CD4-positive, alpha-beta memory T cell (primary cell): ENCODE measurements at regions of chr17 and their contacts with region 1.

Region 1: DNA sequence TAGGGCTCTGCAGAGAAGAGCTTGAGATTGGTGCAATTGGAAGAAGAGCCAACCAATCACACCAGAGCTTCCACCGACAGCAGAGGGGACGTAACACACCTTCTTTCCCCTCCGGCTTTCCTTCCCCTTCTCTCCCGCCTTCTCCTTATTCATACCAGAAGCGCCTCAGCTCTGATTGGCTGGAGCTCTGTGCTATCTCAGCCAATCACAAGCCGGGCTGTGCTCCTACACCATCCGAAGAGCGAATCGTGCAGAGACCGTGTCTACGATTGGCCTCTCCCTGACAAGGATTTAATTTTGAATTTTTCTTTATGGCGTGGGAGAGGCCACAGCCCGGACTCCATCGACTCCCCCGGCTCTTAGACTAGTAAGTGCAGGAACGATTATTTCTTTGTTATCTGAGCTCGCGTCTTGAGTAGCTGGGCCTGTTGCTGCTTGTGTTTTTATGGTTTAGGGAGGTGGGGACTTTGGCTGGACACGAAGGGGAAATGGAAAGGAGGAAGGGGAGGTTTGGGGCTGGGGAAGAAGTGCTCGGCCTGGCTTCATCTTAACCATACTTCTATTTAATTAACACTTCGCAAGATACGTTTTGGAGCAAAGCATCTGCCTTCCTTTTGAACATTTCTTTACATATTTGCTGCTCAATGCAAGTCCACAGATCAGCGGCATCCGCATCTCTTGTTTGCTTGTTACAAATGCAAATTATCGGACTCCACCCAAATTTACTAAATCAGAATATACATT is at the start of gene PRR11:
- DNase-seq: peak in 3 of 5 donors; percentile 98 to 99 (median 99)
- H3K4me3 ChIP-seq: peak within 1 kb of the TSS; percentile 93 to 98
- H3K4me3 Mint-ChIP-seq: no peak within 1 kb of the TSS
- H3K27ac ChIP-seq: peak within 1 kb of the TSS; percentile 65
- H3K27ac Mint-ChIP-seq: no peak within 1 kb of the TSS
- H3K4me1 ChIP-seq: peaks cover 60% of the 10 kb centered on the region
- H3K4me1 Mint-ChIP-seq: peaks cover 25 to 53% (median 39%) of the 10 kb centered on the region in 4 donors
- H3K27me3 ChIP-seq: no peaks in the 10 kb centered on the region
- H3K27me3 Mint-ChIP-seq: no peaks in the 10 kb centered on the region
- total RNA-seq, gene PRR11: 0.93 to 2.1 TPM

Region 2: DNA sequence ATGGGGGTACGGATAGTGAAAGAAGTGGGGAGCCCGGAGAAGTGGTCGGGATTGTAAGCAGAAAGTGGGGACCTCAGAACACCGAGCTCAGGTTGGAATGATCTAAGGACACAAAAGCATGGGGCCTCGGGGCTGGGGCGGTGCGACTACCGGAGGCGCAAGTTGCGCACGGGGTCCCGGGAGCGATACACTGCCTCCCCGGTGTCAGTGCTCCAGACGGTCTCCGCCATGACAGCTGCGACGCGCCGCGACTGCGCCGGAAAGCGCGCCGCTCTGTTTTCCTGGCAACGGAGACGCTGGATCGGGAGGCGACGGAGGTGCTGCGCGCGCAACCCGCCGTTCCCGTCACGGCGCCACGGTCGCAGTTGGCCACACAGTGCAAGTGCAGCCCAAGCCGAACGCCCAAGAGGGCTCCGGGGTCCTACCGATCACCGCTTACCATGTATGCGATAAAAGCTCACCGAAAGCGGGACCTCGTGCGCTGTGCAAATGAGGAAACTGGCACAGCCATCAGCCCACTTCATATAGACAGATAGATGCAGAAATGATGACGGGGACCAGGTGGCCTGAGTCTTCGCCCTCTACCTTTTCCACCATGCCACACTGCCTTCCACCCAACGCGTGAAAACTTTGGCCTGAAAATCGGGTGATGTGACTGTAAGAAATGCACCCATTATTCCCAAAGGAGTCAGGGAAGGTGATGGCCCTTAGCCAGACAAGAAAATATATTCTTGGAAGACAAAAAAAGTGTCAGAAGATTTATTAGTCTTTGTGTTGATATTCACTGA is 936.4 kb before region 1 on chr17 and contains the start of gene MKS1:
- CTCF ChIA-PET with region 1: no interaction called
- POLR2A ChIA-PET with region 1: no interaction called
- intact Hi-C with region 1: loop called (anchors 2 kb)
- DNase-seq: peak; percentile 94 to 96 (median 95)
- H3K4me3 ChIP-seq: peak within 1 kb of the TSS; percentile 71 to 88
- H3K4me3 Mint-ChIP-seq: peak within 1 kb of the TSS; percentile 91 to 99 (median 94)
- H3K27ac ChIP-seq: peak within 1 kb of the TSS; percentile 54
- H3K27ac Mint-ChIP-seq: peak within 1 kb of the TSS; percentile 94 to 99 (median 97)
- H3K4me1 ChIP-seq: peaks cover 15% of the 10 kb centered on the region
- H3K4me1 Mint-ChIP-seq: peaks cover 19 to 28% (median 23%) of the 10 kb centered on the region in 4 donors
- H3K27me3 ChIP-seq: no peaks in the 10 kb centered on the region
- H3K27me3 Mint-ChIP-seq: peaks cover 0 to 2% of the 10 kb centered on the region in 2 donors
- total RNA-seq, gene MKS1: 27.7 to 29.4 TPM

Region 3: DNA sequence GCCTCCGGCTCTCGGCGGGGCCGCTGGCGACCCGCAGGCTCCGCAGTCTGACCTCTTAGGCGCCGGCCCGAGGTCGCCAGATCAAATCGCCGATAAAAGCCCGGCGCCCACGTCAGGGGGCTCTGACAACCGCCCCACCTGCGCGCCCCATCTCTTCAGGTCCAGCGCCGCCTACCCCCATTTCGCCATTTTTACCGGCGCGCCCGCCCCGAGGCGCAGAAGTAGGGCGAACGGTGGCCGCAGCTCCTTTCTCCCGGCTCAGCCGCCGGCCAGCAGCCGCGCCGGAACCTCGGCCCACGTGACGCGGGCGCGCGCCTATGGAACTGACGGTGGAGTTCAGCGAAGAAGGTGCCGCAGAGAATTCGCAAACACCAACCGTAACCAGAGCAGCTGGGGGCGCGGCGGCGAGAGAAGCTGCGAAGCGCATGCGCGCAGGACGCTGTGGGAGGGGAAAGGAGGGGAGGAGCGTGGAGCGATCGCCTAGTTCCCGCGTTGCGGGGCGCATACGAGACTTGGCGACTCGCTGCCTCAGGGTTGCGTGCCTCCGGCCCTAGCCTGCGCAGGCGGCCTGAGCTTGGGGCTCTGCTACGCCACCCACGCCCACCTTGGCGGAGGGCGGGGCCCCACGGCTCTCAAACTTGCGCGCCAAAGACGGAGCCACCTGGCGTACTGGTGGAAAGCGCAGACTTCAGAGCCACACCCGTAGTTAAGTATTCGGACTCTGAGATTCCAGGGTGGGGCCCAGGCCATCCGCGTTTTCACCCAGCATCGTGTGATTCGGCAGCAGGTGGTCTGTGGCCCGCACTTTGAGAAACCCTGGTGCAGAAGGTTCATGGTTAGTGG is 48.9 kb before region 1 on chr17 and contains the start of gene TRIM37:
- CTCF ChIA-PET with region 1: interaction called, 3 read pairs
- POLR2A ChIA-PET with region 1: interaction called, 28 read pairs
- intact Hi-C with region 1: loop called (anchors 1 kb)
- DNase-seq: peak; percentile 99 to 100 (median 99)
- H3K4me3 ChIP-seq: peak within 1 kb of the TSS; percentile 67 to 71
- H3K4me3 Mint-ChIP-seq: peak within 1 kb of the TSS; percentile 90 to 96 (median 92)
- H3K27ac ChIP-seq: peak within 1 kb of the TSS; percentile 81
- H3K27ac Mint-ChIP-seq: peak within 1 kb of the TSS; percentile 90 to 97 (median 95)
- H3K4me1 ChIP-seq: peaks cover 29% of the 10 kb centered on the region
- H3K4me1 Mint-ChIP-seq: peaks cover 25 to 47% (median 37%) of the 10 kb centered on the region in 4 donors
- H3K27me3 ChIP-seq: no peaks in the 10 kb centered on the region
- H3K27me3 Mint-ChIP-seq: no peaks in the 10 kb centered on the region
- total RNA-seq, gene TRIM37: 20.7 to 25.0 TPM

Region 4: DNA sequence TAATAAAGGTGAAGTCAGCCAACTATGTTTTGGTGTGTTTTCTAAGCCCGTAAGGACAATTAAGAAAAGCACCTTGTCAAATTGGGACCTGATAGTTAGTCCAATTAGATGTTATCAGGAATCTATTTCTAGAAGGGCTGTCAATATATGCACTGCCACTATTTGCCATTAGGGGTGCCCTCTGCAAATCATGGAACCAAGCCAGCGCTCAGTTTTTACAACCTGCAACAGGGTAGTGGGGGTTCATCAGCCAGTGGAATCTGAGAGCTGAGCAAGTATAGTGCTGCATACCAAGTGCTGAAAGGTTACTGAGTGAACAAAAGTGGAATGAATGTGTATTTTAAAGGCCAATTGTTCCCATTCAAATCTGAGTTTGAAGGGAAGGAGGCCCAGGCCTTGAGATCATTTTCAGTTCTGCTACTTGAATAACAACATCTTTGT is 10.3 kb after region 1 on chr17:
- CTCF ChIA-PET with region 1: interaction called, 15 read pairs
- POLR2A ChIA-PET with region 1: interaction called, 5 read pairs
- intact Hi-C with region 1: no loop called
- DNase-seq: peak; percentile 37 to 52 (median 46)
- H3K4me3 ChIP-seq: no peak overlapping the region
- H3K4me3 Mint-ChIP-seq: peak overlapping the region in 2 of 8 donors; percentile 35 to 69
- H3K27ac ChIP-seq: no peak overlapping the region
- H3K27ac Mint-ChIP-seq: peak overlapping the region in 5 of 7 donors; percentile 31 to 72 (median 53)
- H3K4me1 ChIP-seq: peaks cover 4% of the 10 kb centered on the region
- H3K4me1 Mint-ChIP-seq: peaks cover 3 to 10% (median 5%) of the 10 kb centered on the region in 4 donors
- H3K27me3 ChIP-seq: no peaks in the 10 kb centered on the region
- H3K27me3 Mint-ChIP-seq: no peaks in the 10 kb centered on the region

Region 5: GRCh38 chr17:59220376-59221158 is 65.0 kb after region 1 on chr17 and contains the start of gene GDPD1:
- CTCF ChIA-PET with region 1: interaction called, 3 read pairs
- POLR2A ChIA-PET with region 1: interaction called, 3 read pairs
- intact Hi-C with region 1: loop called (anchors 2 kb)
- DNase-seq: peak; percentile 95 to 98 (median 96)
- H3K4me3 ChIP-seq: peak within 1 kb of the TSS; percentile 97 to 98
- H3K4me3 Mint-ChIP-seq: peak within 1 kb of the TSS; percentile 96 to 100 (median 98)
- H3K27ac ChIP-seq: peak within 1 kb of the TSS; percentile 92
- H3K27ac Mint-ChIP-seq: peak within 1 kb of the TSS; percentile 96 to 100 (median 99)
- H3K4me1 ChIP-seq: peaks cover 7% of the 10 kb centered on the region
- H3K4me1 Mint-ChIP-seq: peaks cover 7 to 15% (median 12%) of the 10 kb centered on the region in 4 donors
- H3K27me3 ChIP-seq: no peaks in the 10 kb centered on the region
- H3K27me3 Mint-ChIP-seq: no peaks in the 10 kb centered on the region
- total RNA-seq, gene GDPD1: 4.5 to 5.3 TPM

Region 6: GRCh38 chr17:59423137-59423703 is 267.6 kb after region 1 on chr17:
- CTCF ChIA-PET with region 1: no interaction called
- POLR2A ChIA-PET with region 1: no interaction called
- intact Hi-C with region 1: no loop called
- DNase-seq: no peak
- H3K4me3 ChIP-seq: no peak overlapping the region
- H3K4me3 Mint-ChIP-seq: no peak overlapping the region
- H3K27ac ChIP-seq: no peak overlapping the region
- H3K27ac Mint-ChIP-seq: no peak overlapping the region
- H3K4me1 ChIP-seq: peaks cover 6% of the 10 kb centered on the region
- H3K4me1 Mint-ChIP-seq: peaks cover 0 to 7% (median 4%) of the 10 kb centered on the region in 4 donors
- H3K27me3 ChIP-seq: no peaks in the 10 kb centered on the region
- H3K27me3 Mint-ChIP-seq: peaks cover 0 to 1% of the 10 kb centered on the region in 2 donors